ENCODE measurements at regions of chr1 and their contacts with region 1.

Region 1: DNA sequence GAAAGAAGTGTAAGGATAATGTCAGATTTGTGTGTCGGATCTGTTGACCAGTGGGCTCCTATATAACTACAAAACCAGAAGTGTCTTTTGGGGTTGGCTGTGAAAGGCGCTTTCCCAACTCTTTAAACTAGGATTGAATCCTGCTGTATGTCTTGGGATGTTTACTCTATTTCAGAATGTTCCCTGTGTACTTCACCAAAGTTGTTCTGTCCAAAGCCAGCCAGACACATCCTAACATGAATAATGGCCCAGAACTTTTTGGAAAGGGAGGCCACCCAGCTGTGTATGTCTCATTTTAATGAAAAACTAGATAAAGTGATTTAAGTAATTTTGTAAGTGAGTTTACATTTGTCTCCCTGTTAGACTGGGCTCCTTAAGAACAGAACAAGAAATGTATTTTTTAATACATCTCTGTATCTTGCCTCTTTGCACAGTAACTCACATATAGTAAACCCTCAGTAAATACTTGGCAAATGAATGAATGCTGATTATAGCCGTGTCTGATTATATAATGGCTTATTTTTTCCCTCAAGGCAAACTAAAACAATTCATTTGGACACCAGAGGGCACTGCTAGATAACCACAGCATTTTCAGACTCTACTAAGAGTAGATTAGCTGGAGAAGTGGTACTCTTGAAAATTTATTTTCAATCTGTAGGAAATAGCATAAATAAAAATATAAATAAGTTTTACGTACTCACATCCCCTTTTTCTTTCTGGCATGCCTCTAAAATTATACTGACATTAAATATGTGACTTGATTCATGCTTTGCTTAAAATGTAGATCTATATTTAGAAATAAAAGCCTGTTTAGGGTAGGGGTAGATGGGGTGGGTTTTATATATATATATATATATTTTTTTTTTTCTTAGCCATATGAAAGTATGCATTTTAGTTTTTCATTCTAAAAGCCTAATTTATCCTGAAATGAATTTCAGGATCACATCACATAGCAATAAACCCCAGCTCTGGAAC is 23.8 kb downstream of the TSEN15 start:
- DNase-seq: peak; percentile 19
- ATAC-seq: no peak
- H3K4me3 Mint-ChIP-seq: no peak overlapping the region
- H3K27ac Mint-ChIP-seq: no peak overlapping the region
- H3K4me1 Mint-ChIP-seq: peaks cover 19% of the 10 kb centered on the region
- H3K27me3 Mint-ChIP-seq: no peaks in the 10 kb centered on the region

Region 2: GRCh38 chr1:184222652-184223052 is 147.3 kb after region 1 on chr1:
- CTCF ChIA-PET with region 1: interaction called, 31 read pairs
- POLR2A ChIA-PET with region 1: no interaction called
- intact Hi-C with region 1: loop called (anchors 1 kb)
- DNase-seq: peak; percentile 62
- ATAC-seq: no peak
- H3K4me3 Mint-ChIP-seq: no peak overlapping the region
- H3K27ac Mint-ChIP-seq: no peak overlapping the region
- H3K4me1 Mint-ChIP-seq: no peaks in the 10 kb centered on the region
- H3K27me3 Mint-ChIP-seq: no peaks in the 10 kb centered on the region

Region 3: DNA sequence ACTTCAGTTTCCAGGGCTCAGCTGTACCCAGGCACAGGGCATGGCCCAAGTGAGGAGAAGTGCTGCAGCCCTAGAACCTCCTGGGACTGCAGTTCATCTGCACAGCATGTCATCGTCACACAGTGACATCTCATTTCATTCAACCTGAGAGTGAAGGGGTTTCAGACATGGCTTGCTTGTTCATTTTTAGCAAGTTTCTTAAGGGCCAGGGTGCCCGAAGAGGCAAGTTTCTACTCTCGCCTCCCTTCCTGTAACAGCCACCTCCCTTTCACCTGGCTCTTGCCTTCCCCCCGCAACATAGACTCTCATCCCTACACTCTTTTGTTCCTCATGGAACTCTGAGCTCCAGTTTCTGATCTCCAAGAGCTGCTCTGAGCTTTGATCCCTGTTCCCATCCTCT is 419.6 kb after region 1 on chr1:
- CTCF ChIA-PET with region 1: no interaction called
- POLR2A ChIA-PET with region 1: no interaction called
- intact Hi-C with region 1: loop called in 1 of 2 experiments (anchors 5 kb)
- DNase-seq: no peak
- ATAC-seq: no peak
- H3K4me3 Mint-ChIP-seq: no peak overlapping the region
- H3K27ac Mint-ChIP-seq: no peak overlapping the region
- H3K4me1 Mint-ChIP-seq: peaks cover 17% of the 10 kb centered on the region
- H3K27me3 Mint-ChIP-seq: no peaks in the 10 kb centered on the region

Region 4: GRCh38 chr1:184691719-184692324 is 616.5 kb after region 1 on chr1:
- CTCF ChIA-PET with region 1: no interaction called
- POLR2A ChIA-PET with region 1: no interaction called
- intact Hi-C with region 1: loop called in 1 of 2 experiments (anchors 10 kb)
- DNase-seq: no peak
- ATAC-seq: no peak
- H3K4me3 Mint-ChIP-seq: no peak overlapping the region
- H3K27ac Mint-ChIP-seq: no peak overlapping the region
- H3K4me1 Mint-ChIP-seq: peaks cover 8% of the 10 kb centered on the region
- H3K27me3 Mint-ChIP-seq: no peaks in the 10 kb centered on the region

Measured in activated CD4-positive, alpha-beta T cell treated with anti-CD3 and anti-CD28 coated beads for 36 hours (primary cell).